ENCODE measurements at regions of chr1 and their contacts with region 1.

Region 1: DNA sequence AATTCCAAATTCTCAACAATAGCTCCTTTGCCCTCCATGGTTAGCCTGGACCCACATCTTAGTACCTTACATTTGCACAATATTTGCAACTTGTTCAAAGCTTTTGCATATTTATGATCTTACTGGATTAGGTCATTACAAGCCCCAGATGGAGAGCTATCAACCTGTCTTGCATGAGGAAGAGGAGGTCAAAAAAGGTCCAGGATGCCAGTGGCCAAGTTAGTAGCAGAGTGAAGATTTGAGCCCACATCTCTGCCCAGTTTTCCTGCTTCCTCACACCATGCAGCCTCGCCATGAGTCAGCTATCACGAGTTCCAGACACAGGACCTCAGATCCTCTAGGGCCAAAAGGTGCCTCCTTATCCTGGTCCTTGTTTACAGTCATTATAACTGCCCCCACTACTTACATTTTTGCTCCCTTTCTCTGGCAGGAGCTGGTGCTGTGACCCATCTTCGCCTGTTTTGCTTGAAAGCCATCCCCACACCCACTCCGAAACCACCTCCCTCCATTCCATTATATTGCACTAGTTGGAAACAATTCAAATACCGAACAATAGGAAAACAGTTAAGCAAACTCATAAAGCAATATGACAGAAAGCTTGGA is 5.0 kb upstream of the AHCYL1 start:
- DNase-seq: peak; percentile 95
- H3K4me3 ChIP-seq: peak overlapping the region in 1 of 3 experiments; percentile 9
- H3K27ac ChIP-seq: peak overlapping the region; percentile 76
- H3K4me1 ChIP-seq: peaks cover 34% of the 10 kb centered on the region
- H3K27me3 ChIP-seq: no peaks in the 10 kb centered on the region
- CTCF ChIP-seq: no peak
- POLR2A ChIP-seq: no peak

Region 2: GRCh38 chr1:109385417-109385816 is 594.2 kb before region 1 on chr1:
- CTCF ChIA-PET with region 1: no interaction called
- POLR2A ChIA-PET with region 1: no interaction called
- dilution Hi-C with region 1: no loop called
- intact Hi-C with region 1: no loop called
- DNase-seq: no peak
- H3K4me3 ChIP-seq: no peak overlapping the region
- H3K27ac ChIP-seq: no peak overlapping the region
- H3K4me1 ChIP-seq: no peaks in the 10 kb centered on the region
- H3K27me3 ChIP-seq: peaks cover 9 to 11% of the 10 kb centered on the region in 2 experiments
- CTCF ChIP-seq: no peak
- POLR2A ChIP-seq: no peak

Region 3: DNA sequence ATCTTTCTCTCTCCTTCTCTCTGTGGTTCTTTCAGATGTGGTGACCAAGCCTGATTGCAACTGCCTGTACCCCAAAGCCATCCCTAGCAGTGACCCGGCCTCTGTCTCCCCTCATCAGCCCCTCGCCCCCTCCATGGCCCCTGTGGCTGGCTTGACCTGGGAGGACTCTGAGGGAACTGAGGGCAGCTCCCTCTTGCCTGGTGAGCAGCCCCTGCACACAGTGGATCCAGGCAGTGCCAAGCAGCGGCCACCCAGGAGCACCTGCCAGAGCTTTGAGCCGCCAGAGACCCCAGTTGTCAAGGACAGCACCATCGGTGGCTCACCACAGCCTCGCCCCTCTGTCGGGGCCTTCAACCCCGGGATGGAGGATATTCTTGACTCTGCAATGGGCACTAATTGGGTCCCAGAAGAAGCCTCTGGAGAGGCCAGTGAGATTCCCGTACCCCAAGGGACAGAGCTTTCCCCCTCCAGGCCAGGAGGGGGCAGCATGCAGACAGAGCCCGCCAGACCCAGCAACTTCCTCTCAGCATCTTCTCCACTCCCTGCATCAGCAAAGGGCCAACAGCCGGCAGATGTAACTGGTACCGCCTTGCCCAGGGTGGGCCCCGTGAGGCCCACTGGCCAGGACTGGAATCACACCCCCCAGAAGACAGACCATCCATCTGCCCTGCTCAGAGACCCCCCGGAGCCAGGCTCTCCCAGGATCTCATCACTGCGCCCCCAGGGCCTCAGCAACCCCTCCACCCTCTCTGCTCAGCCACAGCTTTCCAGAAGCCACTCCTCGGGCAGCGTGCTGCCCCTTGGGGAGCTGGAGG is 56.3 kb before region 1 on chr1:
- CTCF ChIA-PET with region 1: interaction called, 90 read pairs
- POLR2A ChIA-PET with region 1: interaction called, 4 read pairs
- dilution Hi-C with region 1: no loop called
- intact Hi-C with region 1: loop called (anchors 1 kb)
- DNase-seq: no peak
- H3K4me3 ChIP-seq: no peak overlapping the region
- H3K27ac ChIP-seq: no peak overlapping the region
- H3K4me1 ChIP-seq: no peaks in the 10 kb centered on the region
- H3K27me3 ChIP-seq: no peaks in the 10 kb centered on the region
- CTCF ChIP-seq: peak; percentile 39 to 51
- POLR2A ChIP-seq: no peak

Region 4: GRCh38 chr1:109931189-109931731 is 48.3 kb before region 1 on chr1:
- CTCF ChIA-PET with region 1: interaction called, 90 read pairs
- POLR2A ChIA-PET with region 1: no interaction called
- dilution Hi-C with region 1: no loop called
- intact Hi-C with region 1: loop called (anchors 5 kb)
- DNase-seq: peak; percentile 90
- H3K4me3 ChIP-seq: no peak overlapping the region
- H3K27ac ChIP-seq: no peak overlapping the region
- H3K4me1 ChIP-seq: peaks cover 11% of the 10 kb centered on the region
- H3K27me3 ChIP-seq: no peaks in the 10 kb centered on the region
- CTCF ChIP-seq: no peak
- POLR2A ChIP-seq: no peak